A673 (cell line): ENCODE measurements at regions of chr5 and their contacts with region 1.

Region 1: GRCh38 chr5:75931175-75931574 is 152.0 kb upstream of the SV2C start:
- DNase-seq: no peak
- H3K4me3 ChIP-seq: no peak overlapping the region
- H3K27ac ChIP-seq: no peak overlapping the region
- H3K4me1 ChIP-seq: peaks cover 7% of the 10 kb centered on the region
- H3K27me3 ChIP-seq: no peaks in the 10 kb centered on the region
- CTCF ChIP-seq: no peak

Region 2: DNA sequence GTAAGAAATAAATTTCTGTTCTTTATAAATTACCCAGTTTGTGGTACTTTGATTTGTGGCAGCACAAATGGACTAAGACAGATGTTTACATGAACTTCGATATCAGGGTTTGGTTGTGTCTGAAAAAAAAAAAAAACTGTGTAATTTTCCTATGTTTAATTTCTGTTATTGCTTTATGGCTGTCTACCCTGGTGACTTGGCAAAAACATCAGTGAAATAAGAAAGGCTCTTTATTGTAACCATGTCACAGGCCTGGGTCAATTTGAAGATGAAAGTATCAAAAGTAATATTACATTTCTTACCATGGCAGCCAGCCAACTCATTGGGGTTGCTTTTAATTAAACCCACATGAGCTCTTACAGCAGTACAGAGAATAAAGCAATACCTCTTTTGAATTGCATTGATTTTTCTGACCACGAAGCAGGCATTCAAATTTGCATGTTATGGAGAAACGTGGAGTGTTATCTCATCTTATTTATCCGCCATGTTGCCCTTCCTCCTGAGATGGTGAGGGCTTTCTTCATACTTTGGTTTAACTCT is 131.4 kb after region 1 on chr5:
- CTCF ChIA-PET with region 1: interaction called, 10 read pairs
- POLR2A ChIA-PET with region 1: no interaction called
- intact Hi-C with region 1: no loop called
- DNase-seq: no peak
- H3K4me3 ChIP-seq: no peak overlapping the region
- H3K27ac ChIP-seq: no peak overlapping the region
- H3K4me1 ChIP-seq: no peaks in the 10 kb centered on the region
- H3K27me3 ChIP-seq: peaks cover 8% of the 10 kb centered on the region
- CTCF ChIP-seq: no peak

Region 3: GRCh38 chr5:76145945-76146344 is 214.8 kb after region 1 on chr5:
- CTCF ChIA-PET with region 1: no interaction called
- POLR2A ChIA-PET with region 1: no interaction called
- intact Hi-C with region 1: no loop called
- DNase-seq: peak; percentile 42
- H3K4me3 ChIP-seq: no peak overlapping the region
- H3K27ac ChIP-seq: no peak overlapping the region
- H3K4me1 ChIP-seq: no peaks in the 10 kb centered on the region
- H3K27me3 ChIP-seq: no peaks in the 10 kb centered on the region
- CTCF ChIP-seq: peak; percentile 50